Ascending aorta (tissue), 2 donors: ENCODE measurements at regions of chr7 and their contacts with region 1.

Region 1: GRCh38 chr7:111561885-111562732 is at the start of gene IMMP2L:
- DNase-seq: peak; percentile 53 to 91
- H3K4me3 ChIP-seq: peak within 1 kb of the TSS; percentile 81 to 88
- H3K27ac ChIP-seq: peak within 1 kb of the TSS; percentile 78 to 88
- H3K4me1 ChIP-seq: no peaks in the 10 kb centered on the region
- H3K27me3 ChIP-seq: no peaks in the 10 kb centered on the region
- CTCF ChIP-seq: peak in 2 of 3 experiments; percentile 29 to 61
- total RNA-seq, gene IMMP2L: 143 TPM

Region 2: DNA sequence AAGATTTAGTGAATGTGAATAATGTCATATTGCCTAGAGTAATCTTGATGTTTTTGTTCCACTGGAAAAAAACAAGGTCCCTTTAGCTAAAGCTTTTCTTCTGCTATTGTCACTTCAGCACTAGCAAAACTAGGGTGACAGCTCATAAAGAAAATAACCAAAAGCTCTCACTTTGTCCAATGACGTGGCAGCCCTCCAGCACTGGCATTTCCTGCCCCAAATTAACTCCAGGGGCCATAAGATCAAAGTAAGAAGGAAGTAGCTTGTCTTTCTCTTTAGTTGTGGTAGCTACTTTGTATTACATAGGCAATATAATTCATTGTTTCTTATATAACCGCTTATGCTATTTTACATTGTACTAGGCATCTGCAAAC is 423.9 kb before region 1 on chr7:
- intact Hi-C with region 1: loop called (anchors 5 kb)
- DNase-seq: peak; percentile 44 to 79
- H3K4me3 ChIP-seq: peak overlapping the region in 1 of 2 donors; percentile 6
- H3K27ac ChIP-seq: peak overlapping the region; percentile 82 to 84
- H3K4me1 ChIP-seq: peaks cover 4 to 28% of the 10 kb centered on the region in 2 donors
- H3K27me3 ChIP-seq: no peaks in the 10 kb centered on the region
- CTCF ChIP-seq: no peak

Region 3: GRCh38 chr7:111532625-111533024 is 29.5 kb before region 1 on chr7:
- intact Hi-C with region 1: loop called (anchors 2 kb)
- DNase-seq: no peak
- H3K4me3 ChIP-seq: no peak overlapping the region
- H3K27ac ChIP-seq: peak overlapping the region; percentile 56 to 70
- H3K4me1 ChIP-seq: peaks cover 0 to 26% of the 10 kb centered on the region in 2 donors
- H3K27me3 ChIP-seq: no peaks in the 10 kb centered on the region
- CTCF ChIP-seq: no peak

Region 4: DNA sequence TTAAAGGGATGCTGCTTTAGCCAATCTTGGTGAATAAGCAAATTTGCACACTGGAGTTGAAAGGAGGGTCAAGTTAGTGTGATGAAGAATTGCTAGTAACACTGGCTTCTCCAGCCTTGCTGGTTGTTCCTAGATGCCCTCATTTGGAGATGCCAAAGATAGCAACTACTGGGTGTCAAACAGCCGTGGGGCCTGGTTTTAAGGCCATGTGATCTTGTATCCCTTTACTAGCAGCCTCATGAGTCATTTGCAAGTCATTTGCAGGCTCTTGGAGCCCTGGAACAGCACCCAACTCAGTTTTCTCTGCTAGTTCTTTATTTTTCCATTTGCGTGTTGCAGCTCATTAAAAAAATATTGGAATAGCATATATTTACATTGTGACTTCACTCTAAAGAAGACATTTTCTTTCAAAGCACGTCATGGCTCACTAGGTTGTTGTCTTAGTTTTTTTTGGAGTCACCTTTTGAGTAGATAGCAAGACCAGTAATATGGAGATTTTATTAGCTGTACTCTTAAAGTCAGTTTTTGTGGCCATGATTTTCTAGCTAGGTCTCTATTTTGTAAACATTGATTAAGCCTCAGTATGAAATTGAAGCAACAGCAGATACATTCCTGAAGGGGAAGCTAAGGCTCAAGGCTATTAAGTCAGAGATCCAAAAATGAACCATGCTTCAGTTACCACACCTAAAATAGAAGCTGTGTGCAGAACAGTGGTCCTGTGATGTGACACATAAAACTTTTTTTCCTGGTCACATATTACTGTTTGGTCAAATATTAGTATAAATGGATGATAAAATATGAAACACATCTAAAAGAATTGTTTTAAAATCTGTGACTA is 919.9 kb after region 1 on chr7:
- intact Hi-C with region 1: loop called (anchors 10 kb)
- DNase-seq: peak; percentile 77 to 94
- H3K4me3 ChIP-seq: no peak overlapping the region
- H3K27ac ChIP-seq: peak overlapping the region; percentile 81
- H3K4me1 ChIP-seq: peaks cover 4 to 35% of the 10 kb centered on the region in 2 donors
- H3K27me3 ChIP-seq: no peaks in the 10 kb centered on the region
- CTCF ChIP-seq: no peak